ENCODE measurements at regions of chr10 and their contacts with region 1.

Region 1: GRCh38 chr10:132382231-132382922 is 14.6 kb upstream of the PWWP2B start:
- DNase-seq: no peak
- ATAC-seq: no peak
- H3K4me3 ChIP-seq: no peak overlapping the region
- H3K27ac ChIP-seq: no peak overlapping the region
- H3K4me1 ChIP-seq: no peaks in the 10 kb centered on the region
- H3K27me3 ChIP-seq: no peaks in the 10 kb centered on the region
- CTCF ChIP-seq: no peak
- POLR2A ChIP-seq: no peak
- RAD21 ChIP-seq: no peak

Region 2: GRCh38 chr10:132142411-132143161 is 239.8 kb before region 1 on chr10:
- CTCF ChIA-PET with region 1: no interaction called
- POLR2A ChIA-PET with region 1: no interaction called
- RAD21 ChIA-PET with region 1: no interaction called
- intact Hi-C with region 1: no loop called
- DNase-seq: no peak
- ATAC-seq: peak; percentile 95
- H3K4me3 ChIP-seq: no peak overlapping the region
- H3K27ac ChIP-seq: no peak overlapping the region
- H3K4me1 ChIP-seq: peaks cover 0 to 3% of the 10 kb centered on the region in 2 experiments; a peak in 1 of 4 replicates
- H3K27me3 ChIP-seq: no peaks in the 10 kb centered on the region
- CTCF ChIP-seq: peak; percentile 51 to 70 (median 57); a peak in 5 of 6 replicates
- POLR2A ChIP-seq: no peak
- RAD21 ChIP-seq: peak; percentile 75

Region 3: DNA sequence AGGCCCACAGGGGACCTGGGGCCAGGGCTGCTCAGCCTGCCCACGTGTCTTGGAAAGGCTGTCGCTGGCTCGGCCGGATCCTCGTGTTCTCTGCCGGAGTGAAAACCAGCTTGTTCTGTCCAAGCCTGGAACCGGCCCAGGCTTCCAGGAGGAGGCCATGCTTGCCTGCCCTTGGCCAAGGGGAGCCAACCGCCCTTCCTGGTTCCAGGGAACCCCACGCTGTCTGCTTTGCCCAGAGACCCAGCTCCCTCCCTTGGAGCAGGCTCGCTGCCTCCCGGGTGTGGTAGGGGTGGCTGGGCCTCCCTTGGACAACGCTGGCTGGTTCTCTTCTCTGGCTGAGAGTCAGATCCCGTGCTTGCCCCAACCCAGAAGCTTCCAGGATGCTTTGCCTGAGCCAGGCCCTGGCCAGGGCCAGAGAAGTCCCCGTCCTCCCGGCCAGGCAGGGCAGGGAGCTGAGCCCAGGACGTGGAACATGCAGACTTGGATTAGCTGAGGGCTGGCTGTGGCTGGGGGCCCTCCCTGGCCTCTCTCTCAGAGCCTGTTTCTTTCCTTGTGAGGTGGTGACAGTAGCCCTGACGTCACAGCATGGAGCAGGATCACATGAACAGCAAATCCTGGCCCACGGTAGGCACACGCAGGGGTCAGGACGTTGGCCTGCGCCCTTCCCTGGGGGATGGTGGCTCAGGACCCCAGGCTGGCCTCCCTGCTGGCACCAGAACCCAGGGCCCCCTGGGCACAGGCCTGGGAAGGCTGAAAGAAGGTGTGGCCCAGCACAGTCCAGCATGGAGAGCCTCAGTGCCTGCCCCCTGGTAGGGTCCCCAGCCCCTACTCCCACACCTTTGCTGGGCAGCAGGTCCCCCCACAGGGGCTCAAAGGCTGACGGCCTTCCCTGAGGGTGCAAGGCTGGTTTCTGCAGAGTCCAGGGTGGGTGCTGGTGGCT is 82.1 kb after region 1 on chr10:
- CTCF ChIA-PET with region 1: no interaction called
- POLR2A ChIA-PET with region 1: no interaction called
- RAD21 ChIA-PET with region 1: no interaction called
- intact Hi-C with region 1: no loop called
- DNase-seq: no peak
- ATAC-seq: no peak
- H3K4me3 ChIP-seq: no peak overlapping the region
- H3K27ac ChIP-seq: no peak overlapping the region
- H3K4me1 ChIP-seq: peaks cover 0 to 8% of the 10 kb centered on the region in 2 experiments; a peak in 1 of 4 replicates
- H3K27me3 ChIP-seq: no peaks in the 10 kb centered on the region
- CTCF ChIP-seq: no peak
- POLR2A ChIP-seq: no peak
- RAD21 ChIP-seq: no peak

Region 4: GRCh38 chr10:132489087-132489703 is 106.8 kb after region 1 on chr10:
- CTCF ChIA-PET with region 1: no interaction called
- POLR2A ChIA-PET with region 1: no interaction called
- RAD21 ChIA-PET with region 1: no interaction called
- intact Hi-C with region 1: no loop called
- DNase-seq: no peak
- ATAC-seq: no peak
- H3K4me3 ChIP-seq: no peak overlapping the region
- H3K27ac ChIP-seq: no peak overlapping the region
- H3K4me1 ChIP-seq: no peaks in the 10 kb centered on the region
- H3K27me3 ChIP-seq: no peaks in the 10 kb centered on the region
- CTCF ChIP-seq: no peak
- POLR2A ChIP-seq: no peak
- RAD21 ChIP-seq: no peak

Region 5: GRCh38 chr10:132637477-132638129 is 255.2 kb after region 1 on chr10:
- CTCF ChIA-PET with region 1: no interaction called
- POLR2A ChIA-PET with region 1: no interaction called
- RAD21 ChIA-PET with region 1: no interaction called
- intact Hi-C with region 1: loop called (anchors 5 kb)
- DNase-seq: peak; percentile 7
- ATAC-seq: peak; percentile 77
- H3K4me3 ChIP-seq: no peak overlapping the region
- H3K27ac ChIP-seq: no peak overlapping the region
- H3K4me1 ChIP-seq: no peaks in the 10 kb centered on the region
- H3K27me3 ChIP-seq: no peaks in the 10 kb centered on the region
- CTCF ChIP-seq: peak; percentile 37 to 80 (median 55)
- POLR2A ChIP-seq: no peak
- RAD21 ChIP-seq: peak; percentile 84